B cell (primary cell): ENCODE measurements at regions of chr17 and their contacts with region 1.

Region 1: DNA sequence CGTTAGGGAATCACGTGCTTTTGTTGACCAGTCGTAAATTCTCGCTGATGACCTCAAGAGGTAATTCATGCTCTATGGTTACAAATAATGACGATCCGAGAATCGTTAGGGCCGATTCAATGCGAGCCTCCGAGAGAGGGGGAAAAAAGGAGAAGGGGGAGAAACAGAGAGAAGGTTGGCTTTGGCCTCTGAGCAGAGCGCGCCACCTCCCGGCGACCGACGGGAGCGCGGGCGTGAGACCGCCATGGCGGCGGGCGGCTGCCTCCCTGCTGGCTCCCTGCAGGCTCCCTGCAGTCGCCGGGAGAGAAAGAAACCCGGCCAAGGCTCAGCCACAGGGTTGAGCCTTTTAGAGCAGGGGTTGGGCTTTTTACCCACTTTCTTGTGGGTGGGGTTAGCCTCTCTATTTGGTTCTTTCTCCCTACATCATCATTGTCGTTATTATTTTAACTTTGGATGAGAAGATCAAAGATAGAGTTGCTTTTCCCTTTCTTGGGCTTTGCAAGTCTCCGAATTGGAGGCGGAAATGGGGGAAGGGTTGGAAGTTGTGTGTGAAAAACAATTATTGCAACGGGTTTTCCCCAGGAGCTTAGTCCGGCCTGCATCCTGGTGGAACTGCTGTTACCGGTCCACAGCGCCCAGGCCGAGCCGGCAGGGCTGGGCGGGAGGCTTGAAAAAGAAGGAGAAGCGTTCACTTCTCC is 410 bp upstream of the HOXB5 start:
- DNase-seq: peak; percentile 87
- ATAC-seq: peak; percentile 68
- H3K4me3 ChIP-seq: peak overlapping the region in 2 of 5 experiments; percentile 21 to 44
- H3K4me3 Mint-ChIP-seq: peak overlapping the region; percentile 83
- H3K27ac ChIP-seq: no peak overlapping the region
- H3K27ac Mint-ChIP-seq: no peak overlapping the region
- H3K4me1 ChIP-seq: peaks cover 61 to 70% of the 10 kb centered on the region in 2 donors
- H3K4me1 Mint-ChIP-seq: peaks cover 58% of the 10 kb centered on the region
- H3K27me3 ChIP-seq: peaks cover 0 to 99% (median 80%) of the 10 kb centered on the region in 4 experiments
- H3K27me3 Mint-ChIP-seq: peaks cover 90% of the 10 kb centered on the region
- CTCF ChIP-seq: peak; percentile 89

Region 2: GRCh38 chr17:48261297-48261880 is 332.6 kb before region 1 on chr17:
- CTCF ChIA-PET with region 1: interaction called, 19 read pairs
- POLR2A ChIA-PET with region 1: no interaction called
- intact Hi-C with region 1: no loop called
- DNase-seq: no peak
- ATAC-seq: no peak
- H3K4me3 ChIP-seq: no peak overlapping the region
- H3K4me3 Mint-ChIP-seq: no peak overlapping the region
- H3K27ac ChIP-seq: no peak overlapping the region
- H3K27ac Mint-ChIP-seq: no peak overlapping the region
- H3K4me1 ChIP-seq: no peaks in the 10 kb centered on the region
- H3K4me1 Mint-ChIP-seq: no peaks in the 10 kb centered on the region
- H3K27me3 ChIP-seq: no peaks in the 10 kb centered on the region
- H3K27me3 Mint-ChIP-seq: no peaks in the 10 kb centered on the region
- CTCF ChIP-seq: peak; percentile 30

Region 3: DNA sequence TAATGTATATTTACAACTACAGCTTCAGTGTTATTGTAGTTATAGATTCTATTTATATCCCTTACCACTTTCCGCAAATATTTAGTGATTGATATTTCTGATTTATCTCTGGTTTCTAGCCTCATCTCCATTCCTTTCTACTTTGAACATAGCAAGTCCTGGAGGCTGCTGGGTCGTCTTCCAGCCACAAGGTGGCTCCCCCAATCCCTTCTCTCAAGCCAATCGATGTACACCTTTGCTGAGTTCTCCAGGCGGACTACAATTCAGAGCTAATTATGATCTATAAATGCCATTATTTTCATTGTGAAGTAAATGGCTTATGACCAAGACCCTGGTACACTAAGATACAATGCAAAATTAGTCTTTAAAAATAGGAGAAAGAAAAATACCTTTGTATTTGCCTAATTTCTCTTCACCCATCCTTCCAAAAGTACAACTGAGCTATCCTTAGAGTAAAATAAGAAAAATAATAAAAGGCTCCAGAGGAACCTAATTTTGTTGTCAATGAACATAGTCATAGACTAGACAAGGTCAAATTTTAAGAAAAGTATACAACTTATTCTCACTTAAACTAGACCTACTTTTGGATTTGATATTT is 286.1 kb before region 1 on chr17:
- CTCF ChIA-PET with region 1: interaction called, 39 read pairs
- POLR2A ChIA-PET with region 1: no interaction called
- intact Hi-C with region 1: loop called (anchors 1 kb)
- DNase-seq: peak; percentile 70
- ATAC-seq: peak; percentile 72
- H3K4me3 ChIP-seq: no peak overlapping the region
- H3K4me3 Mint-ChIP-seq: no peak overlapping the region
- H3K27ac ChIP-seq: no peak overlapping the region
- H3K27ac Mint-ChIP-seq: no peak overlapping the region
- H3K4me1 ChIP-seq: no peaks in the 10 kb centered on the region
- H3K4me1 Mint-ChIP-seq: peaks cover 3% of the 10 kb centered on the region
- H3K27me3 ChIP-seq: no peaks in the 10 kb centered on the region
- H3K27me3 Mint-ChIP-seq: peaks cover 4% of the 10 kb centered on the region
- CTCF ChIP-seq: peak; percentile 88

Region 4: GRCh38 chr17:48335858-48336500 is 258.0 kb before region 1 on chr17:
- CTCF ChIA-PET with region 1: interaction called, 64 read pairs
- POLR2A ChIA-PET with region 1: interaction called, 4 read pairs
- intact Hi-C with region 1: loop called (anchors 2 kb)
- DNase-seq: peak; percentile 79
- ATAC-seq: peak; percentile 47
- H3K4me3 ChIP-seq: no peak overlapping the region
- H3K4me3 Mint-ChIP-seq: no peak overlapping the region
- H3K27ac ChIP-seq: no peak overlapping the region
- H3K27ac Mint-ChIP-seq: no peak overlapping the region
- H3K4me1 ChIP-seq: no peaks in the 10 kb centered on the region
- H3K4me1 Mint-ChIP-seq: no peaks in the 10 kb centered on the region
- H3K27me3 ChIP-seq: no peaks in the 10 kb centered on the region
- H3K27me3 Mint-ChIP-seq: peaks cover 4% of the 10 kb centered on the region
- CTCF ChIP-seq: peak; percentile 91

Region 5: GRCh38 chr17:48577946-48578615 is 15.9 kb before region 1 on chr17 and contains the start of gene HOXB4:
- CTCF ChIA-PET with region 1: interaction called, 4 read pairs
- POLR2A ChIA-PET with region 1: no interaction called
- intact Hi-C with region 1: loop called (anchors 2 kb)
- DNase-seq: peak; percentile 77
- ATAC-seq: peak; percentile 72
- H3K4me3 ChIP-seq: peak within 1 kb of the TSS; percentile 48 to 77 (median 61)
- H3K4me3 Mint-ChIP-seq: peak within 1 kb of the TSS; percentile 88
- H3K27ac ChIP-seq: no peak within 1 kb of the TSS
- H3K27ac Mint-ChIP-seq: peak within 1 kb of the TSS; percentile 80
- H3K4me1 ChIP-seq: peaks cover 50 to 55% of the 10 kb centered on the region in 2 donors
- H3K4me1 Mint-ChIP-seq: peaks cover 49% of the 10 kb centered on the region
- H3K27me3 ChIP-seq: peaks cover 0 to 64% (median 47%) of the 10 kb centered on the region in 4 experiments
- H3K27me3 Mint-ChIP-seq: peaks cover 48% of the 10 kb centered on the region
- CTCF ChIP-seq: no peak
- total RNA-seq, gene HOXB4: 1.5 and 1.7 TPM in 2 replicates

Region 6: GRCh38 chr17:48610282-48611211 is 16.6 kb after region 1 on chr17 and contains the start of gene HOXB7:
- CTCF ChIA-PET with region 1: interaction called, 8 read pairs
- POLR2A ChIA-PET with region 1: interaction called, 6 read pairs
- intact Hi-C with region 1: loop called (anchors 2 kb)
- DNase-seq: peak; percentile 73
- ATAC-seq: peak; percentile 46
- H3K4me3 ChIP-seq: peak within 1 kb of the TSS; percentile 36 to 96 (median 87)
- H3K4me3 Mint-ChIP-seq: peak within 1 kb of the TSS; percentile 92
- H3K27ac ChIP-seq: no peak within 1 kb of the TSS
- H3K27ac Mint-ChIP-seq: peak within 1 kb of the TSS; percentile 69
- H3K4me1 ChIP-seq: peaks cover 52 to 61% of the 10 kb centered on the region in 2 donors
- H3K4me1 Mint-ChIP-seq: peaks cover 39% of the 10 kb centered on the region
- H3K27me3 ChIP-seq: peaks cover 2 to 85% (median 58%) of the 10 kb centered on the region in 4 experiments
- H3K27me3 Mint-ChIP-seq: peaks cover 69% of the 10 kb centered on the region
- CTCF ChIP-seq: no peak
- total RNA-seq, gene HOXB7: 0.36 and 1.3 TPM in 2 replicates

Region 7: DNA sequence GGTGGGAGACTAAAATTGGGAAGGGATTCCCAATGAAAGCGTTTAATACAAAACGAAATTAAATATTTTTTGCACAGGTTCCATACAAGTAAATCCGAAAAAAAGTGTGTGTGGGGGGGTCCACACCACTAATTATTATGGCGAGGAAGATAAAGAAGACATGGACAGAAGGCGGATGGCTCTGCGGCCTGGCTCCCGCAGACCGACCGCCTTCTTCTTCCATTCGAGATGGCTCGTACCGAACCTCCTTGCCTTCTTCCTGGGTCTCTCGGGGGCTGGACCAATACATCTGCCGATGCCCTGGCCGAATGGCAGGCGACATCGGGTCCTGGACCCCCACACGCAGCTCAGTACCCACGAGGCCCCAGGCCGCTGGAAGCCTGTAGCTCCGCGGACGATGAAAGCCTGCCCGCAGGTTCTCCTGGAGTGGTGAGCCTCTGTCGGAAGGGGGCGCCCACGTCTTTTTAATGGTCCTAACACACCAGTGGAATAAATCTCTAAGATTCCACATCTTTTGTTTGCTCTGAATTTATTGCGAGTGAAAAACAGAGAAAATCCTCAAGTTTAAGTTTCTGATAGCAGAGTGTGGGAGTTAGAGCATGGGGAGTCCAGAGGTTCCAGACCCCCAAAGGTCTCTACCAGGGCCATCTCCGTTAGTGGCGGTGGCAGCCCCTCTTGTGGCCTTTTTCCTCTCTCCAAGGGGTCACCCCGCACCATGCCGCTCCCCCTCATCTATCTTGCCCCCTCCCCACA is 130.4 kb after region 1 on chr17:
- CTCF ChIA-PET with region 1: interaction called, 7 read pairs
- POLR2A ChIA-PET with region 1: no interaction called
- intact Hi-C with region 1: loop called (anchors 5 kb)
- DNase-seq: peak; percentile 77
- ATAC-seq: peak; percentile 47
- H3K4me3 ChIP-seq: peak overlapping the region in 1 of 5 experiments; percentile 18
- H3K4me3 Mint-ChIP-seq: peak overlapping the region; percentile 62
- H3K27ac ChIP-seq: no peak overlapping the region
- H3K27ac Mint-ChIP-seq: peak overlapping the region; percentile 69
- H3K4me1 ChIP-seq: peaks cover 51 to 77% of the 10 kb centered on the region in 2 donors
- H3K4me1 Mint-ChIP-seq: peaks cover 35% of the 10 kb centered on the region
- H3K27me3 ChIP-seq: peaks cover 0 to 100% (median 89%) of the 10 kb centered on the region in 4 experiments
- H3K27me3 Mint-ChIP-seq: peaks cover 80% of the 10 kb centered on the region
- CTCF ChIP-seq: peak; percentile 68